Right cardiac atrium (tissue), 5 donors: ENCODE measurements at regions of chr1 and their contacts with region 1.

Region 1: GRCh38 chr1:147890177-147890790 is 12.3 kb upstream of the GJA8 start:
- DNase-seq: peak; percentile 75 to 90 (median 82)
- ATAC-seq: peak; percentile 90
- H3K4me3 ChIP-seq: no peak overlapping the region
- H3K27ac ChIP-seq: no peak overlapping the region
- H3K4me1 ChIP-seq: no peaks in the 10 kb centered on the region
- H3K27me3 ChIP-seq: no peaks in the 10 kb centered on the region

Region 2: GRCh38 chr1:147273409-147274336 is 616.6 kb before region 1 on chr1:
- intact Hi-C with region 1: loop called in 1 of 4 experiments (anchors 10 kb)
- DNase-seq: no peak
- ATAC-seq: peak; percentile 72 to 81
- H3K4me3 ChIP-seq: peak overlapping the region; percentile 10
- H3K27ac ChIP-seq: no peak overlapping the region
- H3K4me1 ChIP-seq: no peaks in the 10 kb centered on the region
- H3K27me3 ChIP-seq: no peaks in the 10 kb centered on the region

Region 3: GRCh38 chr1:147494998-147495580 is 395.2 kb before region 1 on chr1:
- intact Hi-C with region 1: loop called in 1 of 4 experiments (anchors 2 kb)
- DNase-seq: peak; percentile 82 to 87 (median 82)
- ATAC-seq: peak; percentile 94
- H3K4me3 ChIP-seq: no peak overlapping the region
- H3K27ac ChIP-seq: no peak overlapping the region
- H3K4me1 ChIP-seq: peaks cover 4% of the 10 kb centered on the region
- H3K27me3 ChIP-seq: no peaks in the 10 kb centered on the region

Region 4: GRCh38 chr1:147627435-147628110 is 262.7 kb before region 1 on chr1:
- intact Hi-C with region 1: loop called in 1 of 4 experiments (anchors 10 kb)
- DNase-seq: peak; percentile 57 to 79 (median 67)
- ATAC-seq: peak; percentile 80 to 84
- H3K4me3 ChIP-seq: no peak overlapping the region
- H3K27ac ChIP-seq: no peak overlapping the region
- H3K4me1 ChIP-seq: no peaks in the 10 kb centered on the region
- H3K27me3 ChIP-seq: no peaks in the 10 kb centered on the region

Region 5: DNA sequence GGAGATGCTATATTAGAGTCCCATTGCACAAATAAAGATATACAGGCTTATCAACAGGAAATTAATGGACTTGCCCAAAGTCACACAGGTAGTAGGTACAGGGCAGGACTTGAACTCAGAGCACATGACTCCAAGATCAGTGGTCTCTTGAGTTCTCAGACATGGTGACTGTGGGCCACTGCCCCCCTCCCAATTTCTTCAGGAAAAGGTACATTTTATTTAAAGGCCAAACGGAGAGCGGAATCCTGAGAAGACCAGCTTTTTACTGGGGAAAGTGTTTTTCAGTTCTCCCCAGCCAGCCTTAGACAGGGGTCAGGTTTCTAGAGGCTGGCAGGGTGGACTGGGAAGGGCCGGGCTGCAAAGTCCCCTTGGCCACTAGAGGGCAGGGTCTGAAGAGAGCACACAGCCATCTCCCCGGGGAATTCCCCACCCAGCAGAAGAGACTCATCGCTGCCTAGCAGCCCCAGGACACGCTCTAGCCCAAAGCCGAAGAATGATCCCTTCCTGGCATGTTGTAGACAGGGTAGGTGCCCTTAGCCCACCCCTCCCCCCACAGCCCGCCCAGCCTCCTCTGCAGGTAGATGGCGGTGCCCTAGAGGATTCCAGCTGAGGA is 249.6 kb before region 1 on chr1:
- intact Hi-C with region 1: loop called in 2 of 4 experiments (anchors 10 kb)
- DNase-seq: peak; percentile 69 to 83 (median 81)
- ATAC-seq: peak; percentile 76 to 91
- H3K4me3 ChIP-seq: no peak overlapping the region
- H3K27ac ChIP-seq: no peak overlapping the region
- H3K4me1 ChIP-seq: no peaks in the 10 kb centered on the region
- H3K27me3 ChIP-seq: no peaks in the 10 kb centered on the region

Region 6: GRCh38 chr1:147723691-147724323 is 166.5 kb before region 1 on chr1:
- intact Hi-C with region 1: loop called (anchors 1 to 10 kb)
- DNase-seq: peak; percentile 52 to 74 (median 72)
- ATAC-seq: peak; percentile 89 to 90
- H3K4me3 ChIP-seq: no peak overlapping the region
- H3K27ac ChIP-seq: peak overlapping the region; percentile 21
- H3K4me1 ChIP-seq: peaks cover 2% of the 10 kb centered on the region
- H3K27me3 ChIP-seq: no peaks in the 10 kb centered on the region

Region 7: DNA sequence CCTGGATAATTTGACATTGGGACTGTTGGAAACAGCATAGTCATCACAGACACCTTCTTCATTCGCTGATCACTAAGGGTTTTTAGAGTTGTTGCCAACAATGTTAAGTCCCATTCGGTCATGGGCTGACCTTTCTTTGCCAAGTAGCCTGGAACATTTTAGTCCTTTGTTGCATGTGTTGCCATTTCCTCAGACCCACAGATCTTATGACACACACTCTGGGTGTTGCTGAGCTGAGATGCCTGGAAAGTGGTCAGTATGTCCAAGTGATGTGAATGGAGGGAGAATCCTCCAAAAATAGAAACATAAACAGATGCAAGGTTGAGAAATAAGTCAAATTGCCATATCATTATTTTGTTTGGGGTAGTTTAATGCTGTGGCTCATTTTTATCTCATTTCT is 68.4 kb before region 1 on chr1:
- intact Hi-C with region 1: no loop called
- DNase-seq: peak in 2 of 3 donors; percentile 17 to 22
- ATAC-seq: peak; percentile 94
- H3K4me3 ChIP-seq: no peak overlapping the region
- H3K27ac ChIP-seq: peak overlapping the region; percentile 90
- H3K4me1 ChIP-seq: peaks cover 4% of the 10 kb centered on the region
- H3K27me3 ChIP-seq: no peaks in the 10 kb centered on the region